ENCODE measurements at regions of chr1 and their contacts with region 1.

Region 1: DNA sequence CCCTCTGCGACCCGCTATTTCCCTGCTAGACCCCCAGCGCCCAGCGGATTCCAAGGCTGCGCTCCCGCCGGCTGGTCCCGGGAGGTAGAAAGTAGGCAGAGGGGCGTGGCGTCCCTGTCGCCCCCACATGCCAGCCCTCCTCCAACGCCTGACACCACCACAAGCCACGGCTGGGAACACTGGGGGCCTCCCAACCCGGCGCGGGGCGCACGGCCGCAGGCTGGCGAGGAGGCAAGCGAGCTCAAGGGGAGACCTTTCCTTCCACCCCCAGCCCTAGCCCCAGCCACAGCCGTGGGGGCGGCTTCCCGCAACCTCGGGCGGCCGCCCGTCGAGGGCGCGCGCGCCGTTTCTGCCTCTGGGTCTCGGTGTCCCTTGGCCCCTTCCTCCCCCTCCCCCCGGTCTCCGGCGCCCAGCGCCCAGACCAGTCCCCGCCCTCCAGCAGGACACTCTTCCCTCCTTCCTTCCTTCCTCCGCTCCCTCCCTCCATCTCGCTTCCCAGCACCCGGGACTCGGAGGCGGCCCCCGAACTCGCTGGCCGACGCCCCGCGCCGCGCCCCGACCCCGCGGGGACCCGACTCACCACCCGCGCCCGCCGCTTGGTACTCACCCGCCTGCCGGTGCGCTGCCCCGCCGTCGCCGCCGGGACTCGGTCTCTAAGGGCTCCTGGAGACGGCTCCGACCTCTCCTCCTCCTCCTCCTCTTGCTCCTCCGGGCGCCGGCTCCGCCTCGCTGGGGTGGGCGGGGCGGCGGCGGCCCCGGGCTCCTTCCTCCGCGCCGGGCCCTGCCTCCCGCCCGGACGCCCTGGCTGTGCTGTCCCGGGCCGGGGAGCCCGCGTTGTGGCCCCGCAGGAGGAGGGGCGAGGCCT is at the start of gene GNG12:
- DNase-seq: peak; percentile 77
- H3K4me3 ChIP-seq: peak within 1 kb of the TSS; percentile 72 to 92 (median 90)
- H3K27ac ChIP-seq: peak within 1 kb of the TSS; percentile 90
- H3K4me1 ChIP-seq: peaks cover 54% of the 10 kb centered on the region
- H3K27me3 ChIP-seq: no peaks in the 10 kb centered on the region
- CTCF ChIP-seq: no peak
- total RNA-seq, gene GNG12: 130 to 183 TPM

Region 2: GRCh38 chr1:67846543-67846942 is 13.6 kb after region 1 on chr1:
- CTCF ChIA-PET with region 1: no interaction called
- dilution Hi-C with region 1: no loop called
- in situ Hi-C with region 1: no loop called
- intact Hi-C with region 1: loop called (anchors 1 kb)
- DNase-seq: peak; percentile 94
- H3K4me3 ChIP-seq: no peak overlapping the region
- H3K27ac ChIP-seq: peak overlapping the region; percentile 58
- H3K4me1 ChIP-seq: peaks cover 38% of the 10 kb centered on the region
- H3K27me3 ChIP-seq: no peaks in the 10 kb centered on the region
- CTCF ChIP-seq: no peak

Region 3: DNA sequence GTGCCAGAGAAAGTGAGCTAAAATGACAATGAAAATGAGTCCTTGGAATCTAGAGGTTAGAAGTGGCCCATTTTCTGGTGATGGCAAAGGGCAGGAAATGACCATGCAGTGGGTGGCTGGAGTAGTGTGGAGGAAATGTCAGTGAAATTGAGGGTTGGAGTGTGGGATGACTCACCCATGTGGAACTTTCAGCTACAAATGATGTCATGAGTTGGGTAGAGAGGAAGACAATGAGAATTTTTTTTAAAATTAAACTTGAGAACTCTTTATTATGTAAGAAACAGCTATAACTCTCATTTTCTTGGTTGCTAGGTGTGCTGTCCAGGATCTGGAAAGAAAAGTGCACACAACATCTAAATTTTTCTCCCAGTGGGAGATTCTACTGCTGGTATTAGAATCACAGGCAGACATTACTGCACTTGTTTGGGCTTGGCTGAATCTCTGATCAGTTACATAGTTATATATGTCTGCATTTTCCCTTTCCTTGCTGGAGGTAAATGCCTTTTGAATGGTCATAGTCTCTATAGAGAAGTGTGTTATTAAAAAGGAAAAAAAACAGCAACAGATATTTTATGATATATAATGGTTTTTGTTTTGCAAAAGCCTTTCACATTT is 57.1 kb after region 1 on chr1:
- CTCF ChIA-PET with region 1: no interaction called
- dilution Hi-C with region 1: no loop called
- in situ Hi-C with region 1: no loop called
- intact Hi-C with region 1: no loop called
- DNase-seq: peak; percentile 84
- H3K4me3 ChIP-seq: no peak overlapping the region
- H3K27ac ChIP-seq: peak overlapping the region; percentile 65
- H3K4me1 ChIP-seq: peaks cover 42% of the 10 kb centered on the region
- H3K27me3 ChIP-seq: no peaks in the 10 kb centered on the region
- CTCF ChIP-seq: no peak

Measured in mammary epithelial cell (primary cell).